Psoas muscle (tissue), 8 donors: ENCODE measurements at regions of chr1 and their contacts with region 1.

Region 1: GRCh38 chr1:184393962-184394361 is 7.1 kb downstream of the C1orf21 start:
- DNase-seq: no peak
- ATAC-seq: no peak
- H3K4me3 ChIP-seq: no peak overlapping the region
- H3K27ac ChIP-seq: peak overlapping the region; percentile 96
- H3K4me1 ChIP-seq: peaks cover 84% of the 10 kb centered on the region
- H3K27me3 ChIP-seq: no peaks in the 10 kb centered on the region
- CTCF ChIP-seq: no peak

Region 2: GRCh38 chr1:184483101-184483683 is 89.2 kb after region 1 on chr1:
- intact Hi-C with region 1: loop called in 1 of 2 experiments (anchors 5 kb)
- DNase-seq: peak; percentile 54 to 68
- ATAC-seq: peak; percentile 86 to 89 (median 86)
- H3K4me3 ChIP-seq: no peak overlapping the region
- H3K27ac ChIP-seq: peak overlapping the region; percentile 87
- H3K4me1 ChIP-seq: peaks cover 81% of the 10 kb centered on the region
- H3K27me3 ChIP-seq: no peaks in the 10 kb centered on the region
- CTCF ChIP-seq: peak; percentile 18